H1 (cell line): ENCODE measurements at regions of chr2 and their contacts with region 1.

Region 1: DNA sequence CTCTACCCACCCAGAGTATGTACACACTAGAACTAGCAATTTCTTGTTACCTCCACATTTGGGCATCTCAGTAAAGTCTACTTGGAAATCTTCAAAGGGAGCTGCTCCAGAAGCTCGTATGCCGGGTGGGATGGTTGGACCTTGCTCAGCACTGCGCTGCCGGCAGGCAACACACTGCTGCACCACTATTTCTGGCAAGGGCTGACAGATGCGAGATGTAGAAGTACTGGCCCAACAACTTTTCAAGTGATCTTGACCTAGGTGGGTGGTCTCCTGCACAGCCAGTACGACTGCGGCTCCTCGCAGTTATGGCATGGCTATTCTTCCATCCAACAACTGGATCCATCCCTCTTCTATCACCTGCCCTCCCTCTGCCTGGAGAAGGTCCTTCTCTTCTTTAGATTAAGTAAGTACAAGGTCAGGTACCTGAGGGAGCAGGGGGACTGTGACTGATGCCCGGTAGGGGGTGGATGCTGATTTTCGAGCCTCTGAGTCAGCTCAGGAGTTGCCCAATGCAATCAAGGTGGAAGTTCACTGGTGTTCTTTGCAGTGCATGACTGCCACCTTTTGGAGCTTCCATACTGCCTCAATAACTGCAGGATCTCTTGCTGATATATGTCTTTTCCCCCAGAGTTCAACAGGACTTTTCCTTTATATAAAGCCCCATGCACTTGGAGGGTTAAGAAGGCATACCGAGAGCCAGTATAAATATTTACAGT is 100.4 kb upstream of the SLC1A4 start:
- DNase-seq: peak in 1 of 2 experiments; percentile 70
- H3K4me3 ChIP-seq: no peak overlapping the region
- H3K27ac ChIP-seq: no peak overlapping the region
- H3K4me1 ChIP-seq: no peaks in the 10 kb centered on the region
- H3K27me3 ChIP-seq: no peaks in the 10 kb centered on the region
- CTCF ChIP-seq: peak in 2 of 3 experiments; percentile 39 to 51; a peak in 3 of 4 replicates
- EP300 ChIP-seq: no peak
- POLR2A ChIP-seq: no peak
- RAD21 ChIP-seq: peak; percentile 73 to 75

Region 2: GRCh38 chr2:64157792-64158191 is 731.0 kb before region 1 on chr2:
- CTCF ChIA-PET with region 1: no interaction called
- POLR2A ChIA-PET with region 1: no interaction called
- DNase-seq: no peak
- H3K4me3 ChIP-seq: no peak overlapping the region
- H3K27ac ChIP-seq: no peak overlapping the region
- H3K4me1 ChIP-seq: peaks cover 0 to 3% (median 0%) of the 10 kb centered on the region in 4 experiments; a peak in 1 of 7 replicates
- H3K27me3 ChIP-seq: no peaks in the 10 kb centered on the region
- CTCF ChIP-seq: no peak
- EP300 ChIP-seq: no peak
- POLR2A ChIP-seq: no peak
- RAD21 ChIP-seq: no peak

Region 3: DNA sequence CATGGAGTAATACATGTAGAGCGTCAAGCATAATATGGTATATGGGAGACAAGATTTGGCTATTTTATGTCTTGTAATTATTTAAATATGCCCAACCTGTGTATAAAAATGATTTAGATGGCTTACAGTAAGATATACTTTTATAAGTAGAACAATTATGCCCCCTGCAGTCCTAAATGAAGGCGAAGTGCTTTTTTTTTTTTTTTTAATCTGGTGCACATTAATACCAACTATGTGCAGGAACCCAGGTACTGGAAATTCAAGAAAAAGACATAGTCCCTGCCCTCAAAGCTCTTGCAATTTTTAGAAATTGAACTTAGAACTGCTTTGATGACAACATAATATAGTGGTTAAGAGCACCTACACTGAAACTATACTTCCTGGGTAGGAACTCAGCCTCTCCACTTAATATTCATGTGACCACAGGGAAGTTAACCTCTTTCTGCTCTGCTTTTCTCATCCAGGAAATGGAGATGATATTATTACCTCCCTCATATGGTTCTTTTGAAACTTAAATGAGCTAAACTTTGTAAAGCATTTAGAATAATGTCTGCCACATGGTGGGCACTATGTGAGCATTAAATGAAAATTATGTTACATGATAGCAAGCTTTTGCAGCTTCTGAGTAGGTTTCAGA is 326.5 kb before region 1 on chr2:
- CTCF ChIA-PET with region 1: no interaction called
- POLR2A ChIA-PET with region 1: no interaction called
- DNase-seq: no peak
- H3K4me3 ChIP-seq: no peak overlapping the region
- H3K27ac ChIP-seq: no peak overlapping the region
- H3K4me1 ChIP-seq: no peaks in the 10 kb centered on the region
- H3K27me3 ChIP-seq: no peaks in the 10 kb centered on the region
- CTCF ChIP-seq: no peak; a peak in 1 of 4 replicates
- EP300 ChIP-seq: no peak
- POLR2A ChIP-seq: no peak
- RAD21 ChIP-seq: peak in 1 of 2 experiments; percentile 33; a peak in 2 of 4 replicates

Region 4: GRCh38 chr2:64904413-64905329 is 15.9 kb after region 1 on chr2:
- CTCF ChIA-PET with region 1: interaction called, 11 read pairs
- POLR2A ChIA-PET with region 1: no interaction called
- DNase-seq: no peak
- H3K4me3 ChIP-seq: no peak overlapping the region
- H3K27ac ChIP-seq: no peak overlapping the region
- H3K4me1 ChIP-seq: peaks cover 0 to 5% (median 0%) of the 10 kb centered on the region in 4 experiments; a peak in 1 of 7 replicates
- H3K27me3 ChIP-seq: no peaks in the 10 kb centered on the region; a peak in 1 of 7 replicates
- CTCF ChIP-seq: no peak
- EP300 ChIP-seq: no peak
- POLR2A ChIP-seq: no peak
- RAD21 ChIP-seq: no peak